ENCODE measurements at regions of chr12 and their contacts with region 1.

Region 1: DNA sequence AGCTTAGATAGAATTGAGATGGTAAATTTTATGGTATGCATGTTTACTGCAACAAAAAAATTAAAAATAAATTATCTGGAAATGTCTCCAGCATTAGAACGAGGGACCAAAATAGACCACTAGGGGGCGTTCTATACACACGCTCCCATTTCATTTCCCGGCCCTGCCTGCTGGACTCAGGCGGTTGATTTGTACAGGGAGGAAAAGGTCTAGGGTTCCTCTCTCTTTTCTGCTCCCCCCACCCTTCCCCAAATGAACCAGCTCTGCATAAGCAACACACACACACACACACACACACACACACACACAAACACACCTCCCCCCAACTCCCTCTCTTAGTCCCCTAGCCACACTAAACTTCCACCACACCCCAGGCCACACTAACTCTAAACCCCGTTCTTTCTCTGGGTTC is 7.8 kb upstream of the DTX1 start:
- DNase-seq: peak; percentile 59
- H3K4me3 ChIP-seq: no peak overlapping the region
- H3K27ac ChIP-seq: no peak overlapping the region
- H3K4me1 ChIP-seq: no peaks in the 10 kb centered on the region
- H3K27me3 ChIP-seq: peaks cover 5% of the 10 kb centered on the region
- CTCF ChIP-seq: peak; percentile 82 to 90 (median 83)
- EP300 ChIP-seq: no peak
- POLR2A ChIP-seq: no peak

Region 2: DNA sequence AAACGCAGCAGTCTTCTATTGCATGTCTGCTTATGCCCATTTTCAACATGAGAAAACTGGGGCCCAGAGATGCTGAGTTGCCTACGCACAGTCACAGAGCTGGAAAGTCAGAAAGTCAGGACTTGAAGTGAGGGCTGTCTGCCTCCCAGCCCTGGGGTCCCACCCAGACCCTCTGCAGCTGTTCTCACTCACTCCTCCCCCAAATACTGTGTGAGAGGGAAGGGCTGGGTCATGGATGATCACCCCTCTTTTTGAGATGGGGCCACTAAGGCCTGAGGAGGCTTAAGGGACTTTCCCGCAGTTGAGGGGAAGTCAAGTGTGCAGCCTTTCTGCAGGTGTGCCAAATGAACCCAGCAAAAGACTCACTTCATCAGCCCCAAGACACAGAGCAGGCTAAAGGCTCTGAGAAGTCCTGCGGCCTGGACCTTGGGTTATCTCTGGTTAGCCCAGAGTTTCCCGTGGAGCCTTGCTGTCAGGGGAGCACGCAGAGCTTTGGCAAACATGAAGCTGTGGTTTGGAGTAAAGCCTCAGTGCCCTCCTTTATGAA is 26.5 kb after region 1 on chr12:
- in situ Hi-C with region 1: no loop called
- intact Hi-C with region 1: no loop called
- DNase-seq: peak; percentile 27
- H3K4me3 ChIP-seq: no peak overlapping the region
- H3K27ac ChIP-seq: peak overlapping the region in 1 of 4 donors; percentile 3
- H3K4me1 ChIP-seq: peaks cover 0 to 3% (median 0%) of the 10 kb centered on the region in 4 donors
- H3K27me3 ChIP-seq: peaks cover 27% of the 10 kb centered on the region
- CTCF ChIP-seq: no peak
- EP300 ChIP-seq: no peak
- POLR2A ChIP-seq: no peak

Region 3: DNA sequence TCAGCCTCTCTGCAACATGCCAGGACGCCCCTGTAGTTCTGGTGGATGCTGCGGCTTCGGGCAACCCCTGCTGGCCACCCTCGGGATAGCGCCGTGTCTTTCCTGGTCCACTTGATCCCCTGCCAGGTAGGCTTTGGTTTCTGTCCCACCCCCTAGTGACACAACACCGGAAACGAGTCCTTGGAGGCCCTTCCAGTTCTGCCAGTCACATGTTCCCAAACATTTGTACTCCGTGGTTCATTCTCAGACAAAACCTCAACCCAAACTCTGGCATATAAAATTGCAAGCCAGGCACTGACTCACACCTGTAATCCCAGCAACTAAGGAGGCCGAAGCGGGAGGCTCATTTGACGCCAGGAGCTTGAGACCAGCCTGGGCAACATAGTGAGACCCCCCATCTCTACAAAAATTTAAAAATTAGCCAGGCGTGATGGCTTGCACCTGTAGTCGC is 49.7 kb after region 1 on chr12:
- in situ Hi-C with region 1: loop called in 1 of 4 experiments (anchors 10 kb)
- intact Hi-C with region 1: no loop called
- DNase-seq: peak; percentile 82
- H3K4me3 ChIP-seq: no peak overlapping the region
- H3K27ac ChIP-seq: no peak overlapping the region
- H3K4me1 ChIP-seq: peaks cover 4 to 9% (median 8%) of the 10 kb centered on the region in 4 donors
- H3K27me3 ChIP-seq: peaks cover 6% of the 10 kb centered on the region
- CTCF ChIP-seq: peak; percentile 63 to 90 (median 78)
- EP300 ChIP-seq: no peak
- POLR2A ChIP-seq: no peak

Region 4: GRCh38 chr12:113152835-113153814 is 104.4 kb after region 1 on chr12:
- in situ Hi-C with region 1: loop called in 2 of 4 experiments (anchors 10 kb)
- intact Hi-C with region 1: no loop called
- DNase-seq: peak; percentile 79
- H3K4me3 ChIP-seq: peak overlapping the region in 3 of 4 donors; percentile 25 to 51 (median 34)
- H3K27ac ChIP-seq: peak overlapping the region in 1 of 4 donors; percentile 51
- H3K4me1 ChIP-seq: peaks cover 10 to 36% (median 30%) of the 10 kb centered on the region in 4 donors
- H3K27me3 ChIP-seq: peaks cover 51% of the 10 kb centered on the region
- CTCF ChIP-seq: peak; percentile 20 to 59 (median 54)
- EP300 ChIP-seq: no peak
- POLR2A ChIP-seq: no peak

Region 5: DNA sequence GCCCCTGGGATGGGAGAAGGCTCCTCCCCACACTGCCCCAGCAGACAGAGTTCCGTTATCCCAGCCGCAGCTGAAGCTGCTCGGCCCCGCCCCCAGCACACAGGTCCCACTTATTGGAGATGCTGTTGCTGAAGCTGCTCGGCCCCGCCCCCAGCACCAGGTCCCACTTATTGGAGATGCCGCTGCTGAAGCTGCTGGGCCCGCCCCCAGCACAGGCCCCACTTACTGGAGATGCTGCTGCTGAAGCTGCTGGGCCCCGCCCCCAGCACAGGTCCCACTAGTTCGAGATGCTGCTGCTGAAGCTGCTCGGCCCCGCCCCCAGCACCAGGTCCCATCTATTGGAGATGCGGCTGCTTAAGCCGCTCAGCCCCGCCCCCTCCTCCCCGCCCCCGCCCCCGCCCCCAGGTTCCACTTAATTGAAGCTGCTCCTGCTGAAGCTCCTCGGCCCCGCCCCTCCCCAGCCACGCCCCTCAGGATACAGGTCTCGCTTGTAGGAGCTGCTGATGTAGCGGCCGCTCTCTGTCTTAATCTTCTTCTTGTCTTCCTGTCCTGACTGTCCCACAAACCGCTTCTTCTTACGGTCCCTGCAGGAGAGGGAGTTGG is 112.8 kb after region 1 on chr12:
- in situ Hi-C with region 1: loop called in 2 of 4 experiments (anchors 10 kb)
- intact Hi-C with region 1: loop called (anchors 10 kb)
- DNase-seq: no peak
- H3K4me3 ChIP-seq: no peak overlapping the region
- H3K27ac ChIP-seq: no peak overlapping the region
- H3K4me1 ChIP-seq: no peaks in the 10 kb centered on the region
- H3K27me3 ChIP-seq: no peaks in the 10 kb centered on the region
- CTCF ChIP-seq: no peak
- EP300 ChIP-seq: no peak
- POLR2A ChIP-seq: no peak

Region 6: GRCh38 chr12:113174461-113175384 is 126.0 kb after region 1 on chr12:
- in situ Hi-C with region 1: loop called in 1 of 4 experiments (anchors 5 kb)
- intact Hi-C with region 1: loop called (anchors 10 kb)
- DNase-seq: peak; percentile 78
- H3K4me3 ChIP-seq: no peak overlapping the region
- H3K27ac ChIP-seq: no peak overlapping the region
- H3K4me1 ChIP-seq: no peaks in the 10 kb centered on the region
- H3K27me3 ChIP-seq: no peaks in the 10 kb centered on the region
- CTCF ChIP-seq: peak; percentile 91 to 100 (median 99)
- EP300 ChIP-seq: no peak
- POLR2A ChIP-seq: no peak

Region 7: GRCh38 chr12:113208041-113208934 is 159.6 kb after region 1 on chr12:
- in situ Hi-C with region 1: no loop called
- intact Hi-C with region 1: no loop called
- DNase-seq: peak; percentile 67
- H3K4me3 ChIP-seq: no peak overlapping the region
- H3K27ac ChIP-seq: peak overlapping the region; percentile 62 to 77 (median 66)
- H3K4me1 ChIP-seq: peaks cover 0 to 21% (median 0%) of the 10 kb centered on the region in 4 donors
- H3K27me3 ChIP-seq: no peaks in the 10 kb centered on the region
- CTCF ChIP-seq: no peak
- EP300 ChIP-seq: no peak
- POLR2A ChIP-seq: no peak

Region 8: GRCh38 chr12:113462117-113462774 is 413.5 kb after region 1 on chr12:
- in situ Hi-C with region 1: no loop called
- intact Hi-C with region 1: no loop called
- DNase-seq: peak; percentile 81
- H3K4me3 ChIP-seq: peak overlapping the region in 1 of 4 donors; percentile 45
- H3K27ac ChIP-seq: no peak overlapping the region
- H3K4me1 ChIP-seq: peaks cover 8 to 38% (median 33%) of the 10 kb centered on the region in 4 donors
- H3K27me3 ChIP-seq: peaks cover 100% of the 10 kb centered on the region
- CTCF ChIP-seq: peak; percentile 61 to 87 (median 76)
- EP300 ChIP-seq: no peak
- POLR2A ChIP-seq: no peak

Measured in transverse colon (tissue), 4 donors.